Colonic mucosa (tissue), 4 donors: ENCODE measurements at regions of chr12 and their contacts with region 1.

Region 1: GRCh38 chr12:123150744-123151456 is at the start of gene PITPNM2:
- DNase-seq: peak; percentile 42
- H3K4me3 ChIP-seq: peak within 1 kb of the TSS; percentile 69
- H3K27ac ChIP-seq: peak within 1 kb of the TSS; percentile 67
- H3K4me1 ChIP-seq: no peaks in the 10 kb centered on the region
- H3K27me3 ChIP-seq: no peaks in the 10 kb centered on the region
- CTCF ChIP-seq: no peak
- total RNA-seq, gene PITPNM2: 9.3 to 17.4 TPM

Region 2: GRCh38 chr12:123043536-123044001 is 107.3 kb before region 1 on chr12:
- intact Hi-C with region 1: loop called (anchors 2 kb)
- DNase-seq: peak; percentile 74
- H3K4me3 ChIP-seq: no peak overlapping the region
- H3K27ac ChIP-seq: peak overlapping the region; percentile 44
- H3K4me1 ChIP-seq: peaks cover 4% of the 10 kb centered on the region
- H3K27me3 ChIP-seq: no peaks in the 10 kb centered on the region
- CTCF ChIP-seq: peak; percentile 56

Region 3: GRCh38 chr12:123253658-123254459 is 103.0 kb after region 1 on chr12:
- intact Hi-C with region 1: no loop called
- DNase-seq: no peak
- H3K4me3 ChIP-seq: no peak overlapping the region
- H3K27ac ChIP-seq: no peak overlapping the region
- H3K4me1 ChIP-seq: no peaks in the 10 kb centered on the region
- H3K27me3 ChIP-seq: no peaks in the 10 kb centered on the region
- CTCF ChIP-seq: no peak

Region 4: DNA sequence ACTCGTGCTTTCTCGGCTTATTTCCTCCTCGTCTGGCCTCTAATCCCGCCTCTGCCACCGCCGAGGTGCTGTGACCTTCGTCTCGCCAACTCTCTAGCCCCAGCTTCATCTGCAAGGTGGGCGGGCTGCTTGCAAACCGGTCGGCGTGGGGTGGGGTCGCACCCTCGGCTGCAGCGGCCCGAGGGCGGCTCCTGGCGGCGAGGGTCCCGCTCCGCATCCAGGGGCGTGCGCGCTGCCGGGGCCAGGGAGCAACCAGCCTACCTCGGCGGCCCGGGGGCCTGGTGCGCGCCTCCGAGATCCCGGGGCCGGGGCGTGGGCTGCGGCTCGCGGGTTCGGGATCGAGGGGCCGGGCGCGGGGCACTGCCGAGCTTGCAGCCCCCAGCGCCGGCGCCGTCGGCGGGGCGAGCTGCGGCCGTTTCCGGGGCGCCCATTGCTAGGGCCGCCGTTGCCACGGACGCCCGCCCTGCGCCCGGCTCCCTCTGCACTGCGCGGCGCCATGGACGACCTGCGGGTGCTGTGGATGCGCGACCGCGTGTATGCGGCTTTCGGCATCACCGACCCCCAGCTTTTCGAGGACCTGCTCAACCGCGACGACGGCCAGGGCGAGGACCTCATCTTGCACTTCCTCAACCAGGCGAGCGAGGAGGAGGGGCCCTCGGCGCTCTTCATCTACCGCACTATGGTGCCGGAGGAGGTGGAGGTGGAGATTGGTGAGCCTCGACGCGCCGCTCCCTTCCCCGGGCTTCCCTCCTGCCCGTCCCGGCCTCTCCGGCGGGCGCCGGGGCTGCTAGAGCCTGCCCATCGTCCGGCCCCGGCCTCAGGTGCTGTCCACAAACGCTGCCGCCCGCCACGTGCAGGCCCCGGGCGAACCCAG is 611.2 kb after region 1 on chr12 and contains the start of gene DNAH10:
- intact Hi-C with region 1: no loop called
- DNase-seq: peak; percentile 54
- H3K4me3 ChIP-seq: peak within 1 kb of the TSS; percentile 58
- H3K27ac ChIP-seq: peak within 1 kb of the TSS; percentile 14
- H3K4me1 ChIP-seq: no peaks in the 10 kb centered on the region
- H3K27me3 ChIP-seq: no peaks in the 10 kb centered on the region
- CTCF ChIP-seq: no peak
- total RNA-seq, gene DNAH10: 0.32 to 0.35 TPM